ENCODE measurements at regions of chr3 and their contacts with region 1.

Region 1: GRCh38 chr3:18740631-18741583 is 315.8 kb upstream of the SATB1 start:
- DNase-seq: peak; percentile 76
- H3K4me3 Mint-ChIP-seq: peak overlapping the region; percentile 36
- H3K27ac Mint-ChIP-seq: peak overlapping the region; percentile 92
- H3K4me1 Mint-ChIP-seq: peaks cover 92% of the 10 kb centered on the region
- H3K27me3 Mint-ChIP-seq: no peaks in the 10 kb centered on the region

Region 2: DNA sequence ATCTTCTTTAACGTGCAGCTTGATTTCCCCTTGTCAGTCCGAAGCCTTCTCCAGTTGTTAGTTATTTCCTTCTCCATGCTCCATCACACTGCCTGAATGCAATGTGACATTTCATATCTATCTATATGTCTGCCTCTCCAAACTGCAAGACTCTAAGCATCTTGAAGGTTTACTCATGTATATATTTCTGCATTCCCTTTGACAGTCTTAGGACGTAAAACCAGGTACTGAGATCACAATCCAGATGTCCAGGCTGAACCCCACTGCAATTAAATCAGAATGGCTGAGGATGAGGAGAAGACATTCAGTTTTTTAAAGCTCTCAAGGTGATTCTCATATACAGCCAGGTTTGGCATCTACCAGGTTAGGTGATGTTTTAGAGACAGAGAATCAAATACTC is 309.6 kb before region 1 on chr3:
- CTCF ChIA-PET with region 1: interaction called, 3 read pairs
- POLR2A ChIA-PET with region 1: interaction called, 10 read pairs
- intact Hi-C with region 1: loop called (anchors 2 kb)
- DNase-seq: no peak
- H3K4me3 Mint-ChIP-seq: peak overlapping the region; percentile 72
- H3K27ac Mint-ChIP-seq: peak overlapping the region; percentile 72
- H3K4me1 Mint-ChIP-seq: peaks cover 72% of the 10 kb centered on the region
- H3K27me3 Mint-ChIP-seq: peaks cover 1% of the 10 kb centered on the region

Region 3: GRCh38 chr3:18657858-18658820 is 82.8 kb before region 1 on chr3:
- CTCF ChIA-PET with region 1: no interaction called
- POLR2A ChIA-PET with region 1: no interaction called
- intact Hi-C with region 1: loop called (anchors 1 kb)
- DNase-seq: peak; percentile 59
- H3K4me3 Mint-ChIP-seq: peak overlapping the region; percentile 67
- H3K27ac Mint-ChIP-seq: peak overlapping the region; percentile 78
- H3K4me1 Mint-ChIP-seq: peaks cover 78% of the 10 kb centered on the region
- H3K27me3 Mint-ChIP-seq: no peaks in the 10 kb centered on the region

Region 4: GRCh38 chr3:18717598-18717997 is 23.3 kb before region 1 on chr3:
- CTCF ChIA-PET with region 1: interaction called, 18 read pairs
- POLR2A ChIA-PET with region 1: interaction called, 120 read pairs
- intact Hi-C with region 1: loop called (anchors 1 kb)
- DNase-seq: no peak
- H3K4me3 Mint-ChIP-seq: no peak overlapping the region
- H3K27ac Mint-ChIP-seq: peak overlapping the region; percentile 91
- H3K4me1 Mint-ChIP-seq: peaks cover 73% of the 10 kb centered on the region
- H3K27me3 Mint-ChIP-seq: no peaks in the 10 kb centered on the region

Region 5: GRCh38 chr3:18758047-18758704 is 17.3 kb after region 1 on chr3:
- CTCF ChIA-PET with region 1: interaction called, 12 read pairs
- POLR2A ChIA-PET with region 1: interaction called, 3 read pairs
- intact Hi-C with region 1: loop called (anchors 1 kb)
- DNase-seq: no peak
- H3K4me3 Mint-ChIP-seq: no peak overlapping the region
- H3K27ac Mint-ChIP-seq: peak overlapping the region; percentile 78
- H3K4me1 Mint-ChIP-seq: peaks cover 39% of the 10 kb centered on the region
- H3K27me3 Mint-ChIP-seq: no peaks in the 10 kb centered on the region